Activated CD4-positive, alpha-beta T cell treated with anti-CD3 and anti-CD28 coated beads, Interleukin-2, amount 10 ng/mL, durations not matched to agents 7 days and 5 days (primary cell): ENCODE measurements at regions of chr5 and their contacts with region 1.

Region 1: GRCh38 chr5:36214434-36214833 is 27.3 kb downstream of the NADK2 start:
- DNase-seq: no peak
- H3K4me3 Mint-ChIP-seq: no peak overlapping the region
- H3K27ac Mint-ChIP-seq: no peak overlapping the region
- H3K4me1 Mint-ChIP-seq: no peaks in the 10 kb centered on the region
- H3K27me3 Mint-ChIP-seq: no peaks in the 10 kb centered on the region

Region 2: GRCh38 chr5:36241631-36242533 is 27.4 kb after region 1 on chr5 and contains the start of gene NADK2:
- CTCF ChIA-PET with region 1: interaction called, 14 read pairs
- POLR2A ChIA-PET with region 1: no interaction called
- DNase-seq: peak; percentile 94
- H3K4me3 Mint-ChIP-seq: peak within 1 kb of the TSS; percentile 88
- H3K27ac Mint-ChIP-seq: peak within 1 kb of the TSS; percentile 97
- H3K4me1 Mint-ChIP-seq: peaks cover 39% of the 10 kb centered on the region
- H3K27me3 Mint-ChIP-seq: peaks cover 2% of the 10 kb centered on the region
- total RNA-seq, gene NADK2: 10.3 to 12.4 TPM

Region 3: DNA sequence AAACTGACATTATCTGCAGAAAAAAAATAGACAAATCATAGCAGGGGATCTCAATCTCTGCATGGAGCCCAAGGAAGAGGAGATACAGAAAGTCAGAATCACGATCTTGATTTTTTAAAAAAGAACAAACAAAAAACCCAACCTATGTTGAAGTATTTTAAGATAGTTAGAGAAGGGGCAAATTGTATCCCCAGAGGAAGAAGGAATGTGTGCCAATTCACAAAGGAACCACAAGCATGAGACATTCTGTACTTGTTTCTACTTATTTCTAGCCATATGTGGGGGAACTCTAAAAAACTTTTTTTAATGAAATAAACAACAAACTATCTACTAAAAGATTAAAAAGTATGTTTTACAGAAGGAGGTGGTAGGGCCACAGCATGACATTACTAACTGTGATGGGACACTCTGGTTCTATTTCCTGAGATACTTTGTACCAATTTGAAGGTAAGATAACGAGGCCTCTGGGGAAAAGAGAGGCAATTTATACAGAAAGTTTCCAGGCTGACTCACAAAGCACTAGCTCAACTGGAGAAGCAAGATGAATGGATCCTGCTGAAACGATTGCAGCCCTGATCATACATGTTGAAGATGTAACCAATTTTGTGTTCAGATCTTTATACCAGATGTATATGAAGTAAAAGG is 64.7 kb after region 1 on chr5:
- CTCF ChIA-PET with region 1: no interaction called
- POLR2A ChIA-PET with region 1: no interaction called
- DNase-seq: no peak
- H3K4me3 Mint-ChIP-seq: no peak overlapping the region
- H3K27ac Mint-ChIP-seq: no peak overlapping the region
- H3K4me1 Mint-ChIP-seq: no peaks in the 10 kb centered on the region
- H3K27me3 Mint-ChIP-seq: peaks cover 20% of the 10 kb centered on the region

Region 4: DNA sequence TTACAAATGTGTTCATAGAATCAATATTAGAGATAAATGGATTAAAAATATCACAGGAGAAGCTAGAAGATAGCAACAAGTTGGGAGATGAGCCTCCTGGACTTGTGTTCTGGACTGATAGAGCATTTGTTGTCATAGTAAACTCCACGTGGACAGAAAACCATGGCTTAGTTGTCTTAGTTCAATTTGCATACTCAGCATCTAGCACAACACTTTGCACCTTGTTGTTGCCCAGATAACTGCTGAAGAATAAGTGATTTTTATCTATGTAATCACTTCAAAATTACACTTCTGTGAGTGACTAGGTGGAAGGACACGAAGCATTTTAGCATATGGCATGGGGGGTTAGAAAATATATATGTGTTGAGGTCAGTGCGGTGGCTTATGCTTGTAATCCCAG is 83.2 kb after region 1 on chr5:
- CTCF ChIA-PET with region 1: no interaction called
- POLR2A ChIA-PET with region 1: no interaction called
- DNase-seq: no peak
- H3K4me3 Mint-ChIP-seq: no peak overlapping the region
- H3K27ac Mint-ChIP-seq: no peak overlapping the region
- H3K4me1 Mint-ChIP-seq: no peaks in the 10 kb centered on the region
- H3K27me3 Mint-ChIP-seq: peaks cover 8% of the 10 kb centered on the region

Region 5: DNA sequence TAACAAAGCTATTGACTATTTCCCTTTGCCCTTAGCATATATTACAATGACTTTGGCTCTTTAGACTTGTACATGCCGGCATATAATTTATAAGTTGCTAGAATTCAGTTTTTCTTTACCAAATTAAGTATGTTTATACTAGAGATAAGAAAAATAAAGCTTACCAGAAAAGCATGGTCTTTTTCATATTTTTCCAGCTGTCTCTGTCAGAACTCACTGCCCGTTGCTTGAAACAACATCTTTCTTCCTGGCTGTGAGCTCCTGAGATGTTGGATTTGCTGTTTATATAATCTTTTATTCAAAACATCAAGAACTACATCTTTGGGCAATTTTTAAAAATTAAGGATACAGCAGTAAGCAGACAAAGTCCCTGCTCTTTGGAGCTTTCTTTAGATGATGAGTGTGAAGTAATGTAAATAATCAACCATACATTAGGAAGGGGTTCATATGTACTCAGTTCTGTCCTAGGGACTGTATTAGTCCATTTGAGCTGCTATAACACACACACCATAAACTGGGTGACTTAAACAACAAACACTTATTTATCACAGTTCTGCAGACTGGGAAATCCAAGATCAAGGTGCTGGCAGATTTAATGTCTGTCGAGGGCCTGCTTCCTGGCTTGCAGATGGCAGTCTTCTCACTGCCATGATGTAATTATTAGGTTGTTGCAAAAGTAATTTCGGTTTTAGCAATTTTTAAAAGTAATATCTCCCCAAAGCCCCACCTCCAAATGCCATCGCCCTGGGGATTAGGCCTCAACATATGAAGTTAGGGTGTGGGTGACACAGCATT is 132.7 kb after region 1 on chr5:
- CTCF ChIA-PET with region 1: no interaction called
- POLR2A ChIA-PET with region 1: no interaction called
- DNase-seq: no peak
- H3K4me3 Mint-ChIP-seq: no peak overlapping the region
- H3K27ac Mint-ChIP-seq: no peak overlapping the region
- H3K4me1 Mint-ChIP-seq: no peaks in the 10 kb centered on the region
- H3K27me3 Mint-ChIP-seq: peaks cover 9% of the 10 kb centered on the region